HepG2 (cell line): ENCODE measurements at regions of chr7 and their contacts with region 1.

Region 1: GRCh38 chr7:21507626-21508343 is 35.1 kb upstream of the DNAH11 start:
- DNase-seq: peak; percentile 34
- ATAC-seq: peak; percentile 93
- H3K4me3 ChIP-seq: no peak overlapping the region
- H3K27ac ChIP-seq: no peak overlapping the region
- H3K4me1 ChIP-seq: no peaks in the 10 kb centered on the region
- H3K27me3 ChIP-seq: no peaks in the 10 kb centered on the region
- CTCF ChIP-seq: peak; percentile 76
- EP300 ChIP-seq: no peak
- POLR2A ChIP-seq: no peak
- RAD21 ChIP-seq: peak; percentile 60

Region 2: GRCh38 chr7:20798081-20798693 is 709.6 kb before region 1 on chr7:
- CTCF ChIA-PET with region 1: no interaction called
- POLR2A ChIA-PET with region 1: no interaction called
- in situ Hi-C with region 1: loop called (anchors 25 kb)
- intact Hi-C with region 1: no loop called
- DNase-seq: no peak
- ATAC-seq: peak; percentile 91
- H3K4me3 ChIP-seq: peak overlapping the region; percentile 40 to 66 (median 53); a peak in 4 of 6 replicates
- H3K27ac ChIP-seq: no peak overlapping the region
- H3K4me1 ChIP-seq: peaks cover 8% of the 10 kb centered on the region
- H3K27me3 ChIP-seq: peaks cover 5 to 47% of the 10 kb centered on the region in 2 experiments; a peak in 4 of 5 replicates
- CTCF ChIP-seq: no peak
- EP300 ChIP-seq: no peak
- POLR2A ChIP-seq: no peak
- RAD21 ChIP-seq: no peak

Region 3: GRCh38 chr7:21261627-21262594 is 245.9 kb before region 1 on chr7:
- CTCF ChIA-PET with region 1: interaction called, 20 read pairs
- POLR2A ChIA-PET with region 1: no interaction called
- in situ Hi-C with region 1: loop called (anchors 5 kb)
- intact Hi-C with region 1: loop called (anchors 1 kb)
- DNase-seq: peak; percentile 32
- ATAC-seq: peak; percentile 96
- H3K4me3 ChIP-seq: no peak overlapping the region
- H3K27ac ChIP-seq: no peak overlapping the region
- H3K4me1 ChIP-seq: no peaks in the 10 kb centered on the region
- H3K27me3 ChIP-seq: no peaks in the 10 kb centered on the region
- CTCF ChIP-seq: peak; percentile 64
- EP300 ChIP-seq: no peak
- POLR2A ChIP-seq: no peak
- RAD21 ChIP-seq: peak; percentile 43; the same call in 1 of the 2 replicates

Region 4: DNA sequence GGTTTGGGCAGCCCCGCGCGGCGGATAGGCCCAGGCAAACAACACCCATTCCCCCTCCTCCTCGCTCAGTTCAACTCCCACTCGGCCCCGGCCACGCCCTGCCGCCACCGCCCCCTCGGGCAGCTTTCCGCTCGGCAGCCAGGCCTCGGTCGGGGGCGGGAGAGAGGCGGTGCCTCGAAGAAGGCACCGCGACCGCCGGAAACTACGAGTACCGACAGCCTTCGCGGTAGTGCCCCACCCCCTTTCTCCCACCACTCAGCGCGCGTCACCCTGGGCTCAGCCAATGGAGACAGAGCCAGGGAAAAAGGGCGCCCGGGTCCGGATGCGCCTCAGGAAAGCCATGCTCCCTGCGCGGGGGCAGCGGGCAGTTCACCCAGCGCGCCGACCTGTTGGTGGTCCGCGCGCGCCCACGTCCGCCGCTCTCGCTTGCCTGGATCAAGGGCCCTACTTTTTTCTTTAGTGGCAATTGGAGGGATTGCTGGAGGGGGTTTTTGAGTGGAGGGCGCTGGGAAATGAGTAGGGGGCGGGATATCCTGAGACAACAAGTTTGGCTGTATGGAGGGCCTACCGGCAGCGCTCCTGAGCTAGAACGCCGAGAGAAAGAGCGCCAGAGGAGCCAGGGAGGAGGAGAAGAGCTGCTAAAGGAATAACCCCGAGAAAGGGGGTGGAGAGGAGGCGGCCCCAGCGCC is 80.5 kb before region 1 on chr7:
- CTCF ChIA-PET with region 1: no interaction called
- POLR2A ChIA-PET with region 1: no interaction called
- in situ Hi-C with region 1: no loop called
- intact Hi-C with region 1: loop called (anchors 5 kb)
- DNase-seq: peak; percentile 94
- ATAC-seq: peak; percentile 93
- H3K4me3 ChIP-seq: peak overlapping the region; percentile 70 to 82 (median 75)
- H3K27ac ChIP-seq: peak overlapping the region; percentile 95
- H3K4me1 ChIP-seq: peaks cover 39% of the 10 kb centered on the region
- H3K27me3 ChIP-seq: no peaks in the 10 kb centered on the region
- CTCF ChIP-seq: peak; percentile 13; the same call in 1 of the 2 replicates
- EP300 ChIP-seq: 0 out of 4 replicates have a peak, but pooled peaks of 1 of the 2 experiments have one; percentile 26
- POLR2A ChIP-seq: peak; percentile 59 to 67; a peak in 3 of 4 replicates
- RAD21 ChIP-seq: no peak